ENCODE measurements at regions of chr1 and their contacts with region 1.

Region 1: DNA sequence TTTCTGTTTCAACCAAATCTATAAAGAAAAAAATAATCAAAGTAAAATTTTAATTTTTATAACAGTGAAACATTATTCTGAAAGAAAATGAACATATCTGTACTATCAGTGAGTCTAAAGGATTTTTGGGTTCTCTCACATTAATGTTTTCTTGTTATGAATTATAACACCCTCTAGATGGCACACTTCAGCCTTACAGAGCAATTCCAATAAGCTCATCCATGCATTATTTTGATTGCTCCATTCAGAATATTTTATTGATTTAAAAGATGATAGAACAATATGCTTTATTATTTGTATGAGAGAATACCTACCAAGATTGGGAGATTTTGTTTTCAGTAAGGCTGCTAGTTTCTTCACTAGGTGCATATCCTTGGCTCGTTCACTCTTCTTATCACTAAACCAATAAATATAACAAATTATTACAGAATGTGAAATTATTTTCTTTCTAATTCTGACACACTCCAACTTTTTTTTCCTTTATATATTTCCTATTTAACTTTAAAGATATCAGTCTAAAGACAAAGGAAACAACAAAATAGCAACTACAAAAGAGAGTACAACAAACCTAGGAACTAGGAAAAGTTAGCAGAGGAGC is 82.4 kb downstream of the RAB3GAP2 start:
- DNase-seq: peak; percentile 64
- H3K4me3 Mint-ChIP-seq: no peak overlapping the region
- H3K27ac Mint-ChIP-seq: no peak overlapping the region
- H3K4me1 Mint-ChIP-seq: no peaks in the 10 kb centered on the region
- H3K27me3 Mint-ChIP-seq: no peaks in the 10 kb centered on the region
- CTCF ChIP-seq: peak; percentile 66

Region 2: GRCh38 chr1:219724440-219724839 is 465.4 kb before region 1 on chr1:
- CTCF ChIA-PET with region 1: no interaction called
- POLR2A ChIA-PET with region 1: no interaction called
- intact Hi-C with region 1: no loop called
- DNase-seq: no peak
- H3K4me3 Mint-ChIP-seq: no peak overlapping the region
- H3K27ac Mint-ChIP-seq: no peak overlapping the region
- H3K4me1 Mint-ChIP-seq: no peaks in the 10 kb centered on the region
- H3K27me3 Mint-ChIP-seq: peaks cover 2% of the 10 kb centered on the region
- CTCF ChIP-seq: no peak

Region 3: GRCh38 chr1:220157738-220158137 is 32.1 kb before region 1 on chr1:
- CTCF ChIA-PET with region 1: interaction called, 10 read pairs
- POLR2A ChIA-PET with region 1: interaction called, 3 read pairs
- intact Hi-C with region 1: no loop called
- DNase-seq: no peak
- H3K4me3 Mint-ChIP-seq: no peak overlapping the region
- H3K27ac Mint-ChIP-seq: no peak overlapping the region
- H3K4me1 Mint-ChIP-seq: no peaks in the 10 kb centered on the region
- H3K27me3 Mint-ChIP-seq: no peaks in the 10 kb centered on the region
- CTCF ChIP-seq: no peak

Region 4: DNA sequence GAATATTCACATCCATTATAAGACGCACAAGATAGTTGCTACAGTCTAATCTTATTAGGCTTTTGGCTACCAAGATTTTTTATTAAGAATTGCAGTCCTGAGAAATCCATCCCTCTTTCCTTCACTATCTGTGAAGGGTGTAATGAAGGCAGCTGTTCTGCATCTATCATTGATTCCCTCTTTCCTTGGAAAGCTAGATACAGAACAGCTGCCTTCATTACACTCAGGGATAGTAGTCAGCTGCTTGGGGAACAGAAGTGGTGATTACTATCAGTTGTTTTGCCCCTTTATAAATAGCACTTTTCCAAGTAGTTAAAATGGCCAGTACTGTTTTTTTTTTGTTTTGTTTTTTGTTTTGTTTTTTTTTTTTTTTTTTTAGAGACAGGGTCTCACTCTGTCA is 25.7 kb before region 1 on chr1:
- CTCF ChIA-PET with region 1: interaction called, 10 read pairs
- POLR2A ChIA-PET with region 1: interaction called, 3 read pairs
- intact Hi-C with region 1: no loop called
- DNase-seq: no peak
- H3K4me3 Mint-ChIP-seq: no peak overlapping the region
- H3K27ac Mint-ChIP-seq: no peak overlapping the region
- H3K4me1 Mint-ChIP-seq: no peaks in the 10 kb centered on the region
- H3K27me3 Mint-ChIP-seq: no peaks in the 10 kb centered on the region
- CTCF ChIP-seq: no peak

Region 5: DNA sequence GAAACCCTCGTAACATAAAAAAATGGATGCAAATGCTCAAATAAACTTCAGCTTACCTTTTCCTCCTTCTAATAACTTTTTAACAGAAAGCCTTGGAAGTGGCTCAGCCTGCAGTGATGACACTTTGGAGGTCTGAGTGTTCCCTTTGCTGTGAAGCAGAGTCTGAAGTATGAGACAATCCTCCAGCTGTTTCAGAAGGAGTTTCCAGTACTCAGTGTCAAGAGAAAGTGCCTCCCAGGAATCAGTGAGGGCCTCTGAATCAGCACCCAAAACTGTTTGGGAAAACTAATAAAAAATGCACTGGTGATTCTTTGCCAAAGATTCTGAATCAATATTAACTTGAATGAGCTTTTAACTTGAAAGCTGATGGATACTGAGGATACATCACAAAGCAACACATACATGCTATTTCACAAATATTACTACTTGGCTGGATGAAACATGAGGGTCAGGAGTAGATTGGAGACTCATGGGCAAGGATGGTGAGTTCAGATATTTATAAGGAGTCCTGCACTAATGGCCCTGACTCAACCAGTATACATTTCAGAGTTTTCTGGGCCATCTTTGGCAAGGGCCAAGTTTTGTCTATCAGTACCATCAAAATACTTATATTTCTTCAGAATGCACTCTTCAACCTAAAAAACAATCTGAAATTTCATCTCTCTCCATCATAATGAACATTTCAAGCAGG is 18.9 kb before region 1 on chr1:
- CTCF ChIA-PET with region 1: interaction called, 49 read pairs
- POLR2A ChIA-PET with region 1: interaction called, 8 read pairs
- intact Hi-C with region 1: no loop called
- DNase-seq: no peak
- H3K4me3 Mint-ChIP-seq: no peak overlapping the region
- H3K27ac Mint-ChIP-seq: no peak overlapping the region
- H3K4me1 Mint-ChIP-seq: no peaks in the 10 kb centered on the region
- H3K27me3 Mint-ChIP-seq: no peaks in the 10 kb centered on the region
- CTCF ChIP-seq: no peak

Region 6: GRCh38 chr1:220176540-220176939 is 13.3 kb before region 1 on chr1:
- CTCF ChIA-PET with region 1: interaction called, 49 read pairs
- POLR2A ChIA-PET with region 1: interaction called, 8 read pairs
- intact Hi-C with region 1: no loop called
- DNase-seq: no peak
- H3K4me3 Mint-ChIP-seq: no peak overlapping the region
- H3K27ac Mint-ChIP-seq: no peak overlapping the region
- H3K4me1 Mint-ChIP-seq: no peaks in the 10 kb centered on the region
- H3K27me3 Mint-ChIP-seq: no peaks in the 10 kb centered on the region
- CTCF ChIP-seq: no peak

Measured in MCF 10A (cell line).